Ascending aorta (tissue), 2 donors: ENCODE measurements at regions of chrX and their contacts with region 1.

Region 1: DNA sequence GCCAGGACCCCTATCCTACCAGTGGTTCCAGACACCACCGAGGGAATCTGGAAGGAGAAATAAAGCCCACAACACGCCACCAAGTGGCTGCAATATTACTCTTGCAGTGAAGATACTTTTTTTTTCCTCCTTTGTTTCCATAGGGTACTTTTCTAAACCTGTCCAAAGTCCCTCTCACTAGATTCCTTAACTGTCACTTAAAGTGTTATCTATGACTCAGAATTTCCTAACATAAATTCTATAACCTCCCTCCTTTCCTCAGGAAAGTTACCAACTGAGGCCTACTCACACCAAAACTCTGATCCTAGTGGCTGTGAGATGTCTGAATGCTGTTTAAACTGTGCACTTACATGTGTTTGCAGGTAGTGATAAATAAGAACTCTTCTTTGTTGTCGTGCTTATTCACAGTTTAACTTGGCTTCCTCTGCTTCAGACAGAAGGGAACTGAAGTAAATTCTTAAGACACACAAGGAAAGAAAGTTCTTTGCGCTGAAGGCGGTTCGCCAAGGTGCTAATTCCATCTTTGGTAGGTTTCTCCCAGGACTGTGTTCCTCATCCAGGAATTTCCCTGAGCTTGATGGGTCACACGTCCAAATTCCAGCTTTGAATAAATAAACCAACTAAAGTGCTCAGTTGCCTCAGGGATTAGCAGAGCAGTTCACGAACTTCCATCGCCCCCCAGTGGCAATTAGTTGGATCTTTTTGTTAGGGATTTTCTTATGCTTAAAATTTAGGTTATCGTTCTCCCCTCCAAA is 10.7 kb upstream of the HCCS start:
- DNase-seq: peak in 1 of 2 donors; percentile 70
- H3K4me3 ChIP-seq: no peak overlapping the region
- H3K27ac ChIP-seq: peak overlapping the region; percentile 35 to 42
- H3K4me1 ChIP-seq: no peaks in the 10 kb centered on the region
- H3K27me3 ChIP-seq: no peaks in the 10 kb centered on the region
- CTCF ChIP-seq: peak in 2 of 3 experiments; percentile 28 to 54

Region 2: DNA sequence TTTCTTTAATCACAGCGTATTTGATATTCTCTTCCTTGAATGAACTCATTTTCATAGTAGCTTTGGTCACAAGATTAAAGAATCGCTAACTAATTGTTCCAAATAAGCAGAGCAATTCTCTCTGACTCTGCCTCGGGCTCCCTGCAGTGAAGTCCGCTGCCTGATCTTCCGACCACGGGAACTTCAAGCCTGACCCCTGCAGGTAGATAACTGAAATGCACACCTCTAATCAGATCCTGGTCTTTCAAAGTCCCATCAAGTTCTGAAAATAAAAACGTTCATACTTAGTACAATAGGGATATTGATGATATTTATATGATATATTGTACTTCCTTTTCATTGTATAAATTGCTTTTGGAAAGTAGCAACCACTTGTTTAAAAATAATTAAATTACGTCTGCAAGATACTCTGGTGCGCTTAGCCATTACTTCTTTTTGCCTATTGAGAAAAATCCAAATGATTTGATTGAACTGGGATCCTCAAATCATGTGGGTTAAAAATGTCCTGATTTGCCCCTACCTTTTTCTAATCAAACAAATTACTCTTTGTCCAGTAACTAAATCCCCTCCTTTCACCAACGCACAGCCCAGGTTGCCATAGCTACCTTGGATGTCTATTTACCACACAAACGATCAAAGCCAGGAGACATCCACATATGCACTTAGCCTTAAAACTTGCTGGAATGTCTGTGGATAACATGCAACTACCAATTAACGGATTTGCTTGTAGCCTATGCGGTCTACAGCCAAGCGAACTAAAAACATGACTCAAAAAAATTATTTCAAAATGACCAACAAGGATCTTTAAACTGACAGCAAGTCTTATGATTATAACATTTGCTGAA is 484.3 kb before region 1 on chrX:
- intact Hi-C with region 1: loop called (anchors 5 kb)
- DNase-seq: no peak
- H3K4me3 ChIP-seq: no peak overlapping the region
- H3K27ac ChIP-seq: no peak overlapping the region
- H3K4me1 ChIP-seq: peaks cover 0 to 2% of the 10 kb centered on the region in 2 donors
- H3K27me3 ChIP-seq: no peaks in the 10 kb centered on the region
- CTCF ChIP-seq: peak; percentile 39 to 63 (median 60)

Region 3: DNA sequence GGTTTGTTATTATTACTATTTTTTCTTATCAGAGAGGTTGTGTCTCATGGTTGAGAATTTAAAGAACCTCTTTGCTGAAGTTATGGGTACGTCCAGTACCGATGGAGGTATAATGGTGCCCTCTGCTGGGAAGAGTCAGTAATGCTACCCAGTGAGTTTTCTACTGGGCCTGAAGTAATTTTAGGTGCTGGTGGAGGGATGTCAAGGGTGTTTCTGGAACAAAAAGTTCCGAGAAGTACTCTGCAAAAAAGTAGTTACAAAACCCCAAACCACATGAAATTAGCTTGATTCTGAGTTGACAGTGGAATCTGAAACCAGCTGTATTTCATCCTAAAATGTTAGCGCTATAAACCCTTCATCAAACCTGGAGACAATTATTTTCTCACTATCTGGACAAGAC is 377.6 kb before region 1 on chrX:
- intact Hi-C with region 1: loop called (anchors 10 kb)
- DNase-seq: peak in 1 of 2 donors; percentile 79
- H3K4me3 ChIP-seq: no peak overlapping the region
- H3K27ac ChIP-seq: no peak overlapping the region
- H3K4me1 ChIP-seq: peaks cover 0 to 2% of the 10 kb centered on the region in 2 donors
- H3K27me3 ChIP-seq: no peaks in the 10 kb centered on the region
- CTCF ChIP-seq: peak; percentile 50 to 67 (median 62)

Region 4: DNA sequence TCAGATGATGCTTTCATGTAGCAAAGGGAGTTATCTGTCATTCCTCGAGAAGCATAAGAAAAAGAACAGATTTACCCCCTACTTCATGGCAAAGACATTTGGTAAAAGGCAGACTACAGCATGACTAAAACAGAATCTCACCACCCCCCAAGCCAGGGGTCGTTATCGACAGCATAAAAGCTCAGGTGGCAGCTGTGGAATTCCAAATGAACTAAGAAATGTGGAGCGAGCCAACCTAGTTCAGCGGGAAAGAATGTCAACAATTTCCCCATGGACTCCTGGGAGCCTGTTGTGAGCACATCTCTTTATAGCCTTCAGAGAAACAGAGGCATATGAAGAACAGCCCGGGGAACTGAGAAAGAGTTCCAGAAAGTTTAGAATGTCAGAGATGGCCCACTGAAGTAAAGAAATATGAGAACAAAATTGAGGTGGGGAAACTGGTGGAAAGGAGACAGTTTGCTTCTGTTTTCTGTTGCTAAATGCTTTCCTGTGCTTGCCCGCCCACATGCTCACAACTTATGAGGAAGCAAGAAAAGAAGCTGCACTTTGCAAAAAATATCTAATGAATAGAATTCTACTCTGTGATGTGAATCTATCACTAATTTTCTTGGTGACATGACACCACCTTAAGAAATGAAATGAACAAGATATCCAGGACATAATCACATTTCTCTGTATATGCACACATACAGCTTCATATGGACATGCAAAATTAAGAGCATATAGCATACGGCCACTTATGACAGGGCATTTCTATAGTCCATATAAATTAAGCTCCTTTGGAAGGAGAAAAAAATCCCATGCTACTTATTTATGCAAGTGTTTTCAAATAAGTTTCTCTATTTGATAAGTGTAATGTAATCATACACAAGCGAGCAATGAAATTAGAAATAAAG is 344.8 kb before region 1 on chrX:
- intact Hi-C with region 1: loop called (anchors 5 kb)
- DNase-seq: no peak
- H3K4me3 ChIP-seq: peak overlapping the region in 1 of 2 donors; percentile 30
- H3K27ac ChIP-seq: peak overlapping the region; percentile 2 to 55
- H3K4me1 ChIP-seq: peaks cover 0 to 5% of the 10 kb centered on the region in 2 donors
- H3K27me3 ChIP-seq: no peaks in the 10 kb centered on the region
- CTCF ChIP-seq: no peak

Region 5: DNA sequence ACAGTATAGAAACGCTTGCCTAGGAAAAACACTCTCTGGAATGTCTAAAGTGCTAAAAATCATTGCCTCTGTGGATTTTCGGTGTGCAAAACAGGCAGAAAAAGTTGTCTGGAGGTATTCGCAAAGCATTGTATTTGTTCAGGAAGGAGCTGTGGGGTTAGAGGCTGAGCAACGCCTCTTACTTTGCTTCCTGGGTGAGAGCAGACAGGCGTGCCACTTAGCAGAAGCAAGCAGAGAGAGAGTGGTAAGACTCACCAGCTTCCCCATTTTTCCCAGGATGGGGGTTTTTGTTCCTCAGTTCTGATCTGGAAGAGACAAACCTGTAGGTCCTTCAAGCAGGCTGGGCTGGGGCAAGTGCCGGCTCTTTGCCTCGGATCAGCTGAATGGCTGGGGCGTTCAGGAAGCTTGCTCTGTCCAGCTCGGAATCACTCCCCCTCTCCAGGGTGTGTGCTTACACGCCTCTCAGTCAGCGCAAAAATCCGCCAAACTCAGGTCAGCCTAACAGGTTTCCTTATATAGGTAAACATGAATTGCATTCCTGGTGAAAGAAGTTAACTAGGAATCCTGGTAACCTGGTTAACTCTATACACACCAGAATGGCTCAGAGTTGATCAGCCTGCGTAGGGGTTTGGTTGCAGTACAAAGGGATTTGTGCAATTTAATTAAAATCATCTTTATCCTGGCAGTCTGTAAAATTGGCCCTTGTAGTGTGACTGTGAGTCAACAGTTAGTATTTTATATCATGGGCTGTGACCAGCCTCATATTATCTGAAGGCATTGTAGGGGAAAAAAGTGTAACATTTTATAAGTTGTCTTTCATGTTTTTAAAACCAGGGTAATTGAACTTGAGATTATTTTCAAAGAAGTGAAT is 266.9 kb before region 1 on chrX:
- intact Hi-C with region 1: loop called (anchors 5 kb)
- DNase-seq: peak in 1 of 2 donors; percentile 64
- H3K4me3 ChIP-seq: peak overlapping the region; percentile 40 to 53
- H3K27ac ChIP-seq: peak overlapping the region; percentile 45 to 56
- H3K4me1 ChIP-seq: no peaks in the 10 kb centered on the region
- H3K27me3 ChIP-seq: no peaks in the 10 kb centered on the region
- CTCF ChIP-seq: no peak